ENCODE measurements at regions of chrX and their contacts with region 1.

Region 1: GRCh38 chrX:150032741-150033140 is 94.5 kb upstream of the EOLA2 start:
- DNase-seq: peak; percentile 40
- H3K4me3 ChIP-seq: no peak overlapping the region
- H3K27ac ChIP-seq: no peak overlapping the region
- H3K4me1 ChIP-seq: peaks cover 34% of the 10 kb centered on the region
- H3K27me3 ChIP-seq: no peaks in the 10 kb centered on the region
- CTCF ChIP-seq: no peak
- POLR2A ChIP-seq: no peak

Region 2: GRCh38 chrX:149003863-149004660 is 1028.7 kb before region 1 on chrX:
- CTCF ChIA-PET with region 1: no interaction called
- POLR2A ChIA-PET with region 1: no interaction called
- dilution Hi-C with region 1: no loop called
- intact Hi-C with region 1: no loop called
- DNase-seq: no peak
- H3K4me3 ChIP-seq: no peak overlapping the region
- H3K27ac ChIP-seq: no peak overlapping the region
- H3K4me1 ChIP-seq: no peaks in the 10 kb centered on the region
- H3K27me3 ChIP-seq: no peaks in the 10 kb centered on the region
- CTCF ChIP-seq: no peak
- POLR2A ChIP-seq: no peak

Region 3: GRCh38 chrX:150062292-150063137 is 29.8 kb after region 1 on chrX:
- CTCF ChIA-PET with region 1: interaction called, 3 read pairs
- POLR2A ChIA-PET with region 1: no interaction called
- dilution Hi-C with region 1: no loop called
- intact Hi-C with region 1: loop called (anchors 2 kb)
- DNase-seq: peak; percentile 68
- H3K4me3 ChIP-seq: no peak overlapping the region
- H3K27ac ChIP-seq: peak overlapping the region; percentile 76
- H3K4me1 ChIP-seq: peaks cover 31% of the 10 kb centered on the region
- H3K27me3 ChIP-seq: no peaks in the 10 kb centered on the region
- CTCF ChIP-seq: no peak
- POLR2A ChIP-seq: no peak

Measured in endothelial cell of umbilical vein (primary cell).